ENCODE measurements at regions of chr15 and their contacts with region 1.

Region 1: DNA sequence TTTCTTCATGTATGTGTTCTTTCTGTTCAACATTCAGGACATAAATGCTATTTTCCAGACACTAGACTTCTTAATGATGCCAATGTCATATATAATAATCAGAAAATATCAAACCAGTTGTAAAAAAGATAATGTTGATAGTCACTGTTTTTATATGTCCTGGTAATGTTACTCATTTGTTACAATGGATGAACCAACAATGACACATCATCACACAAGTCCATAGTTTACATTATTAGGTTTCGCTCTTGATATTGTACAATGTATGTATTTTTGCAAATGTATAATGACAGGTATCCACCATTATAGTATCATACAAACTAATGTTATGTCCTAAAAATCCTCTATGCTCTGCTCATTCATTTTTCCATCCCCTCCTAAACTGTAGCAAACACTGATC is 243.8 kb upstream of the CDIN1 start:
- DNase-seq: no peak
- ATAC-seq: no peak
- H3K4me3 ChIP-seq: no peak overlapping the region
- H3K27ac ChIP-seq: no peak overlapping the region
- H3K4me1 ChIP-seq: no peaks in the 10 kb centered on the region
- H3K27me3 ChIP-seq: no peaks in the 10 kb centered on the region
- CTCF ChIP-seq: no peak
- EP300 ChIP-seq: no peak
- POLR2A ChIP-seq: no peak
- RAD21 ChIP-seq: no peak

Region 2: DNA sequence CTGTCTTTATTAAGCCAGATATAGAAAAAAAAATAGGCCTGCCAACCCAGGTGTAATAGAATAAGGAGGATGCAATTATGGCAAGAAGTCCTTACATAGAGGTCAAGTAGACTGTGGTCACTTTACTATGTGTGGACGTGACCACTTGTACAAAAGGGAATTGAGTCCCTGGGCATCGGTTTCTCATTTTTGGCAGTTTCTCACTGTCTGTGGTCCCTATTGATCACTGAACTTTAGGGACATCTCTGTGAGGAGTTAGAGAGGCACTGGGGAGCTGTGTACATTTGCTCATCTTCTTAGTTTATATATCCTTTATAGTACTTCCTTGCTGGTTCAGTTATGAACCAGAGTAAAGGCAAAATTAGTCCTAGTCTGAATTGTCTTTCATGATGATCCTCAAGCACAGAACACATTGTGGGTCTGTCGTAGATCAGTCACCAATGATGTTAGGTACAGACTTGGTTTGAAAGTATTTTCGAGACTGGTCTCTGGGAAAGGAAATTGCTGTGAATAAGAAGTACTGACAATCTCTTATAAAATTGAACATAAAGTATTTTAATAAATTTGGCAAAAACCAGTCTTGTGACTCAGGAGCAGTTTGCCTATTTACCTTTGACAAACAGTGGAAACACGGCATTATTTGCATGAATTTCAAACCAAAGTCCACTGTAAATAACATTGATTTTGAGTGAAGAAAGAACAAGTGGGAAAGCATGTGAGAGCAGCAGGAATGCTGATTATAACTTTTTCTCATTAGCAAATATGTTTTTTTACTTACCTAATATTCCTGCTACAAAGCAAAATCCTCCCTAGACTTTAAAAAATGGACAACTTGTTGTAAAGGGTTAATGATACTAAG is 570.8 kb before region 1 on chr15:
- CTCF ChIA-PET with region 1: no interaction called
- POLR2A ChIA-PET with region 1: no interaction called
- RAD21 ChIA-PET with region 1: no interaction called
- SMC1A ChIA-PET with region 1: no interaction called
- in situ Hi-C with region 1: no loop called
- intact Hi-C with region 1: loop called (anchors 5 kb)
- DNase-seq: no peak
- ATAC-seq: no peak
- H3K4me3 ChIP-seq: no peak overlapping the region
- H3K27ac ChIP-seq: no peak overlapping the region
- H3K4me1 ChIP-seq: no peaks in the 10 kb centered on the region
- H3K27me3 ChIP-seq: no peaks in the 10 kb centered on the region
- CTCF ChIP-seq: no peak
- EP300 ChIP-seq: no peak
- POLR2A ChIP-seq: no peak
- RAD21 ChIP-seq: no peak

Region 3: DNA sequence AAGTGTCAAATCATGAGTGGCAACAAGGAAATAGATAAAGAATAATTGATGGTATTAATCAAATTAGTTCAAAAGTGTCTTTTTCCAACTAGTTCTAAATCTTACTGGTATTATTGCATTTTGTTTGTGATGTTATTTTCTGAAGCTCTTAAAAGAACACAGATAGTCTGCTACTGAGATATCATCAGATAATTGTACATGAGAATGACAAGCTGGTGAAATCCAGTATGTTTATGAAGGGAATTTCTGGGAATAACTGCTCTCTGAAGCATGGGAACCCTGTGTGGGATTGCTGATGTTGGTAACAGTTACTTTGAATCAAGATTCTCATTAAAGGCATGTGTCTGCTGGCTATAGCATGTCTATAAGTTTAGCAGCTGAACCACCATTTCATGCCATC is 53.4 kb after region 1 on chr15:
- CTCF ChIA-PET with region 1: no interaction called
- POLR2A ChIA-PET with region 1: no interaction called
- RAD21 ChIA-PET with region 1: no interaction called
- SMC1A ChIA-PET with region 1: no interaction called
- in situ Hi-C with region 1: loop called (anchors 5 kb)
- intact Hi-C with region 1: no loop called
- DNase-seq: no peak
- ATAC-seq: no peak
- H3K4me3 ChIP-seq: no peak overlapping the region
- H3K27ac ChIP-seq: no peak overlapping the region
- H3K4me1 ChIP-seq: no peaks in the 10 kb centered on the region
- H3K27me3 ChIP-seq: no peaks in the 10 kb centered on the region
- CTCF ChIP-seq: no peak
- EP300 ChIP-seq: no peak
- POLR2A ChIP-seq: no peak
- RAD21 ChIP-seq: no peak